PC-9 (cell line): ENCODE measurements at regions of chr11 and their contacts with region 1.

Region 1: GRCh38 chr11:43419460-43419859 is 60.7 kb downstream of the TTC17 start:
- DNase-seq: no peak
- H3K4me3 ChIP-seq: no peak overlapping the region
- H3K27ac ChIP-seq: no peak overlapping the region
- H3K4me1 ChIP-seq: no peaks in the 10 kb centered on the region
- H3K27me3 ChIP-seq: no peaks in the 10 kb centered on the region
- CTCF ChIP-seq: peak; percentile 83

Region 2: DNA sequence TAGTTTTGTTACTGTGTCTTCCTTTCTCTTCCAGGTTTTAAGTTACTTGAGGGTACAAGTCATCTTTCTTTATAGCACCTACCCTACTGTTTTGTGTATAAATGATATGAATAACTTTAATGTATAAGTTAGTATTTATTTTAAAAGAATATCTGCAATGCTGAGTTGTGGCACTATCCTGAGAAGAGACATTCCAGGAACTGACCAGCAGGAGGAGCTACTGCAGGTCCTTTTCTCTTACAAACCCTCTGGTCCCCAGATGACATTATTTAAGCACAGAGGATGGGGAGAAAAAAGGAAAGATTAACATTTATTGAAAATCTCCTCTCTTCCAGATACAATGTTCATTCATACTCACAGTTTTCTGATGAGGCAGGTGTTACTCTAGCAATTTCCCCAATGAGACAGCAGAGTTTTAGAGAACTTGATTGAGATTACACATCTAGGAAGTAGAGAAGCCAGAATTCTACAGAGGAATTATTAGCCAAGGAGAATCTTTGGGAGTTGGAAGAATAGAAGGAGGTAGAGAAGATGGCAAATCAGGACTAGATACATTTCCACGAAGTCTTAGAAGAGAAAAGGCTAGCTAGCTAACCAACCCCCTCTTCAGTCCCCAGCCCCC is 648.9 kb before region 1 on chr11:
- CTCF ChIA-PET with region 1: no interaction called
- POLR2A ChIA-PET with region 1: no interaction called
- intact Hi-C with region 1: loop called (anchors 5 kb)
- DNase-seq: no peak
- H3K4me3 ChIP-seq: no peak overlapping the region
- H3K27ac ChIP-seq: no peak overlapping the region
- H3K4me1 ChIP-seq: no peaks in the 10 kb centered on the region
- H3K27me3 ChIP-seq: no peaks in the 10 kb centered on the region
- CTCF ChIP-seq: peak; percentile 79

Region 3: GRCh38 chr11:42974505-42975504 is 444.7 kb before region 1 on chr11:
- CTCF ChIA-PET with region 1: no interaction called
- POLR2A ChIA-PET with region 1: no interaction called
- intact Hi-C with region 1: no loop called
- DNase-seq: no peak
- H3K4me3 ChIP-seq: no peak overlapping the region
- H3K27ac ChIP-seq: no peak overlapping the region
- H3K4me1 ChIP-seq: no peaks in the 10 kb centered on the region
- H3K27me3 ChIP-seq: no peaks in the 10 kb centered on the region
- CTCF ChIP-seq: no peak

Region 4: DNA sequence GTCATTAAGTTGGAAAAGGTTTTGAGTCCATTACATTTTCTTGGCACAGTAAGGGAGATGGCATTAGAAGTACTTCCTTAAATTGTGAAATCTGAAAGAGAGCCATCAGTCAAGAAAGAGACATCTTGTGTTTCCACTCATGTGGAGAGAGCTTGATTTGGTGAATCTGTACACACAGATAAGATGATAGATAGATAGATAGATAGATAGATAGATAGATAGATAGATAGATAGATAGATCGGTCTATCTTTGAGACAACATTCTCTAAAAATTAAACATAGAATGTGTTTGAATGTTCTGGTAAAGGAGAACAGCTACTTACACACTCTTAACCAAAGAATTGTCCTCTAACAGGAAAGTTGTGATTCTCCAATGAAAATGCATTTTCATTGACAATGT is 15.4 kb after region 1 on chr11:
- CTCF ChIA-PET with region 1: interaction called, 11 read pairs
- POLR2A ChIA-PET with region 1: no interaction called
- intact Hi-C with region 1: no loop called
- DNase-seq: no peak
- H3K4me3 ChIP-seq: no peak overlapping the region
- H3K27ac ChIP-seq: no peak overlapping the region
- H3K4me1 ChIP-seq: no peaks in the 10 kb centered on the region
- H3K27me3 ChIP-seq: no peaks in the 10 kb centered on the region
- CTCF ChIP-seq: no peak